AG04450 (cell line): ENCODE measurements at regions of chr1 and their contacts with region 1.

Region 1: DNA sequence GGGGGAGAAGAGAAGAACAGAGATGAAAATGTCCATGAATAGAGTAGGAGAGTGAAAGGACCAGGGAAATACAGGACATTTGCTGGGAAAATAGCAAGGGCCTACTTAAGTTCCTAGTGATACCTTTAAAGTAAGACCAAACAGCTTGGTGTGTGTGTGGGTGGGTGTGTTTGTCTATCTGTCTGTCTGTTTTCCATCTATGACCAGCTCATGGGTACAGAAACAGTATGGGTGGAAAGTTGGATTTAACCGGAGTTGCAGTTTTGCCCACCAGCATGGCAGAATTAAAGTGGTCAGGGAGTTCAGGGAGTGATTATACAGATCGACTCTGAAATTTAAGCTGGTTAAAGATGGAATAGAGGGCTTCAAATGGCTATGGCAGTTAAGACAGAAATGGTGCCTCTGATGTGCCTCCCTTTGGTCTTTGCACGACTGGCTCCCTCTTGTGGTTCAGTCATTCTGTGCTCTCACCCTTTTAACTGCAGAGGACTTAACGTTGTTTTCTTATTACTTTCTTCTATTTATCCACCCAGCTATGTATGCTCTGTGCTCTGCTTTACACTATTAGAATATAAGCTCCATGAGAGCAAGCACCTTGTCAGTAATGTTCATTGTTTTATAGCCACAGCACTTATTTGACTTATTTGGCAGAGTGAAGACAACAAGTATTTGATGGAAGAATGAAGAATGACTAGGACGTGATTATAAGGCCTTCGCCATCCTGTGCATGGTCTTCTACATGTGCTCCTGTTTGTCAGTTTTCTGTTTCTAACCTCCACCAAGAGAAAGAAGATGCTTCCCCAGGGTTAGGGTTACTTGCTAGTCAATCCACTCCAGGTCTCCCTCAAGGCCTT is 72.7 kb upstream of the AK4 start:
- DNase-seq: no peak
- H3K4me3 ChIP-seq: no peak overlapping the region
- H3K27ac ChIP-seq: no peak overlapping the region
- H3K27me3 ChIP-seq: peaks cover 6% of the 10 kb centered on the region
- CTCF ChIP-seq: peak; percentile 81

Region 2: GRCh38 chr1:65059930-65060538 is 15.3 kb before region 1 on chr1:
- CTCF ChIA-PET with region 1: interaction called, 24 read pairs
- POLR2A ChIA-PET with region 1: no interaction called
- DNase-seq: no peak
- H3K4me3 ChIP-seq: no peak overlapping the region
- H3K27ac ChIP-seq: no peak overlapping the region
- H3K27me3 ChIP-seq: peaks cover 5% of the 10 kb centered on the region
- CTCF ChIP-seq: peak; percentile 61